CD4-positive, alpha-beta T cell (primary cell): ENCODE measurements at regions of chr2 and their contacts with region 1.

Region 1: DNA sequence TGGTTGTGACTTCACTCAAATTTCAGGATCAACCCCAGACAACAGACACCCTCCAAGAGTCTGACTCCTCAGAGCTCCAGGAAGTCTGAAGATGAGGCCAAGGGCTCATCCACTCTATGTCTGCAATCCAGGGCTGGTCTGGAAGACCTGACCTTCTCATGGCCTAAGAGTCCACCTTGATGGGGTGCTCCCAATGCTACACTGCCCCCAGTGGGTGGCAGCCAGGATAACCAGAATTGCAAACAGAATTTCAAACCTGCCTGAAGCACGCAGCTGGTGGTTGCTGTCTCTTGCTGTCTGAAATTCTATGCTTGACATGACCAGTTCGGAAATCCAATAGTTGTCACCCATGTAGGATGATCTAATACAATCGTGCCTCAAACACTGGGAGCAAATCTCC is 96.0 kb downstream of the UXS1 start:
- DNase-seq: peak in 5 of 14 experiments; percentile 20 to 58 (median 36)
- ATAC-seq: no peak
- H3K4me3 ChIP-seq: no peak overlapping the region
- H3K4me3 Mint-ChIP-seq: no peak overlapping the region
- H3K27ac ChIP-seq: no peak overlapping the region
- H3K27ac Mint-ChIP-seq: peak overlapping the region; percentile 95
- H3K4me1 ChIP-seq: peaks cover 47% of the 10 kb centered on the region
- H3K4me1 Mint-ChIP-seq: peaks cover 55% of the 10 kb centered on the region
- H3K27me3 ChIP-seq: no peaks in the 10 kb centered on the region
- H3K27me3 Mint-ChIP-seq: no peaks in the 10 kb centered on the region
- CTCF ChIP-seq: no peak

Region 2: GRCh38 chr2:105337124-105338019 is 760.7 kb before region 1 on chr2 and contains the start of gene C2orf49:
- CTCF ChIA-PET with region 1: no interaction called
- POLR2A ChIA-PET with region 1: no interaction called
- intact Hi-C with region 1: loop called in 1 of 2 experiments (anchors 10 kb)
- DNase-seq: peak; percentile 79 to 95 (median 85)
- ATAC-seq: peak; percentile 89
- H3K4me3 ChIP-seq: peak within 1 kb of the TSS; percentile 71
- H3K4me3 Mint-ChIP-seq: peak within 1 kb of the TSS; percentile 99
- H3K27ac ChIP-seq: peak within 1 kb of the TSS; percentile 82 to 97
- H3K27ac Mint-ChIP-seq: peak within 1 kb of the TSS; percentile 100
- H3K4me1 ChIP-seq: peaks cover 19% of the 10 kb centered on the region
- H3K4me1 Mint-ChIP-seq: peaks cover 50% of the 10 kb centered on the region
- H3K27me3 ChIP-seq: no peaks in the 10 kb centered on the region
- H3K27me3 Mint-ChIP-seq: no peaks in the 10 kb centered on the region
- CTCF ChIP-seq: no peak
- total RNA-seq, gene C2orf49: 28.8 to 29.4 TPM

Region 3: GRCh38 chr2:105744091-105744908 is 353.8 kb before region 1 on chr2:
- CTCF ChIA-PET with region 1: interaction called, 4 read pairs
- POLR2A ChIA-PET with region 1: interaction called, 38 read pairs
- intact Hi-C with region 1: loop called in 1 of 2 experiments (anchors 5 kb)
- DNase-seq: peak; percentile 48 to 89 (median 68)
- ATAC-seq: peak; percentile 71
- H3K4me3 ChIP-seq: peak overlapping the region; percentile 58
- H3K4me3 Mint-ChIP-seq: peak overlapping the region; percentile 90
- H3K27ac ChIP-seq: peak overlapping the region; percentile 41 to 68
- H3K27ac Mint-ChIP-seq: peak overlapping the region; percentile 96
- H3K4me1 ChIP-seq: peaks cover 72% of the 10 kb centered on the region
- H3K4me1 Mint-ChIP-seq: peaks cover 87% of the 10 kb centered on the region
- H3K27me3 ChIP-seq: no peaks in the 10 kb centered on the region
- H3K27me3 Mint-ChIP-seq: no peaks in the 10 kb centered on the region
- CTCF ChIP-seq: no peak

Region 4: GRCh38 chr2:105782123-105782522 is 316.0 kb before region 1 on chr2:
- CTCF ChIA-PET with region 1: no interaction called
- POLR2A ChIA-PET with region 1: interaction called, 11 read pairs
- intact Hi-C with region 1: loop called in 1 of 2 experiments (anchors 2 kb)
- DNase-seq: peak in 3 of 14 experiments; percentile 42 to 73 (median 69)
- ATAC-seq: peak; percentile 56
- H3K4me3 ChIP-seq: no peak overlapping the region
- H3K4me3 Mint-ChIP-seq: peak overlapping the region; percentile 81
- H3K27ac ChIP-seq: peak overlapping the region in 1 of 2 donors; percentile 47
- H3K27ac Mint-ChIP-seq: peak overlapping the region; percentile 98
- H3K4me1 ChIP-seq: peaks cover 96% of the 10 kb centered on the region
- H3K4me1 Mint-ChIP-seq: peaks cover 97% of the 10 kb centered on the region
- H3K27me3 ChIP-seq: no peaks in the 10 kb centered on the region
- H3K27me3 Mint-ChIP-seq: no peaks in the 10 kb centered on the region
- CTCF ChIP-seq: peak; percentile 52

Region 5: GRCh38 chr2:105919826-105920225 is 178.3 kb before region 1 on chr2:
- CTCF ChIA-PET with region 1: interaction called, 3 read pairs
- POLR2A ChIA-PET with region 1: interaction called, 4 read pairs
- intact Hi-C with region 1: loop called in 1 of 2 experiments (anchors 5 kb)
- DNase-seq: peak; percentile 39 to 77 (median 52)
- ATAC-seq: peak; percentile 56
- H3K4me3 ChIP-seq: no peak overlapping the region
- H3K4me3 Mint-ChIP-seq: no peak overlapping the region
- H3K27ac ChIP-seq: no peak overlapping the region
- H3K27ac Mint-ChIP-seq: no peak overlapping the region
- H3K4me1 ChIP-seq: peaks cover 30% of the 10 kb centered on the region
- H3K4me1 Mint-ChIP-seq: peaks cover 58% of the 10 kb centered on the region
- H3K27me3 ChIP-seq: no peaks in the 10 kb centered on the region
- H3K27me3 Mint-ChIP-seq: no peaks in the 10 kb centered on the region
- CTCF ChIP-seq: peak; percentile 58

Region 6: GRCh38 chr2:106053116-106053515 is 45.0 kb before region 1 on chr2:
- CTCF ChIA-PET with region 1: no interaction called
- POLR2A ChIA-PET with region 1: interaction called, 13 read pairs
- intact Hi-C with region 1: no loop called
- DNase-seq: peak in 4 of 14 experiments; percentile 34 to 61 (median 42)
- ATAC-seq: peak; percentile 45
- H3K4me3 ChIP-seq: no peak overlapping the region
- H3K4me3 Mint-ChIP-seq: peak overlapping the region; percentile 64
- H3K27ac ChIP-seq: no peak overlapping the region
- H3K27ac Mint-ChIP-seq: peak overlapping the region; percentile 24
- H3K4me1 ChIP-seq: peaks cover 57% of the 10 kb centered on the region
- H3K4me1 Mint-ChIP-seq: peaks cover 73% of the 10 kb centered on the region
- H3K27me3 ChIP-seq: no peaks in the 10 kb centered on the region
- H3K27me3 Mint-ChIP-seq: no peaks in the 10 kb centered on the region
- CTCF ChIP-seq: no peak

Region 7: GRCh38 chr2:106160786-106161261 is 62.7 kb after region 1 on chr2:
- CTCF ChIA-PET with region 1: interaction called, 4 read pairs
- POLR2A ChIA-PET with region 1: interaction called, 40 read pairs
- intact Hi-C with region 1: no loop called
- DNase-seq: peak in 13 of 14 experiments; percentile 22 to 74 (median 50)
- ATAC-seq: peak; percentile 56
- H3K4me3 ChIP-seq: peak overlapping the region; percentile 67
- H3K4me3 Mint-ChIP-seq: peak overlapping the region; percentile 89
- H3K27ac ChIP-seq: peak overlapping the region; percentile 83 to 87
- H3K27ac Mint-ChIP-seq: peak overlapping the region; percentile 95
- H3K4me1 ChIP-seq: peaks cover 66% of the 10 kb centered on the region
- H3K4me1 Mint-ChIP-seq: peaks cover 99% of the 10 kb centered on the region
- H3K27me3 ChIP-seq: no peaks in the 10 kb centered on the region
- H3K27me3 Mint-ChIP-seq: no peaks in the 10 kb centered on the region
- CTCF ChIP-seq: no peak

Region 8: GRCh38 chr2:106547164-106547903 is 449.3 kb after region 1 on chr2:
- CTCF ChIA-PET with region 1: no interaction called
- POLR2A ChIA-PET with region 1: no interaction called
- intact Hi-C with region 1: no loop called
- DNase-seq: no peak
- ATAC-seq: no peak
- H3K4me3 ChIP-seq: no peak overlapping the region
- H3K4me3 Mint-ChIP-seq: no peak overlapping the region
- H3K27ac ChIP-seq: no peak overlapping the region
- H3K27ac Mint-ChIP-seq: no peak overlapping the region
- H3K4me1 ChIP-seq: peaks cover 6% of the 10 kb centered on the region
- H3K4me1 Mint-ChIP-seq: peaks cover 5% of the 10 kb centered on the region
- H3K27me3 ChIP-seq: peaks cover 15 to 22% of the 10 kb centered on the region in 2 experiments
- H3K27me3 Mint-ChIP-seq: peaks cover 37% of the 10 kb centered on the region
- CTCF ChIP-seq: no peak